Mammary epithelial cell (primary cell): ENCODE measurements at regions of chr5 and their contacts with region 1.

Region 1: DNA sequence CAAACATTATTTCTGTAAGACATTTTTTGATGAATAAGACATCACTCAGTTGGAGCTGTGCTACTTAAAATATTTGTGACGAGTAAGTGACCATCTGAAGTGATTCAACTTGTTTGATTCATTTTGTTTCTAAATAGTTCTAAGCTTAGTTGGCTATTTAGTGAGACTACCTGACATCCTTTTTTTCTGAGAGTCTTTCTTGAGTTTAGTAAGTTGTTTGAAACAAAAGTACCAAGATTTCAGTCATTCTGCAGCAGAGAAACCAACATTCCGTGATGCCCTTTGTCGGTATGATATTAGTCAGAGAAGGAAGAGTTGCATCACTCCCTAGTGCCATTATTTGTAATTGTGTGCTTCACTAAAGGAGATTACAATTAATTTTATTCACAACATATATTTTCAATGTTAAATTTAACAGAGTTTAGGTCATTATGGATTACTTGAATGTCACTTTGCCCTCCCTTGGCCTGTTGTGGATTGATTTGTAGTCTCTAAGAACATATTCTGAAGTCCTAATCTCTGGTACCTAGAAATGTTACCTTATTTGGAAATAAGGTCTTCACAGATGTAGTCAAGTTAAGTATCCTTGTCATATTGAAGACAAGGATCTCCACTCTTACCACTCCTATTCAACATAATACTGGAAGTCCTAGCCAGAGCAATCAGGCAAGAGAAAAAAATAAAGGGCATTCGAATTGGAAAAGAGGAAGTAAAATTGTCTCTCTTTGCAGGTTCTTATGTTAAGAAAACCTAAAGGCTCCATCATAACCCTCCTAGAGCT is 212.2 kb downstream of the PCSK1 start:
- DNase-seq: peak; percentile 88
- H3K4me3 ChIP-seq: peak overlapping the region in 1 of 3 experiments; percentile 14
- H3K27ac ChIP-seq: peak overlapping the region; percentile 95
- H3K4me1 ChIP-seq: peaks cover 25% of the 10 kb centered on the region
- H3K27me3 ChIP-seq: no peaks in the 10 kb centered on the region
- CTCF ChIP-seq: no peak

Region 2: DNA sequence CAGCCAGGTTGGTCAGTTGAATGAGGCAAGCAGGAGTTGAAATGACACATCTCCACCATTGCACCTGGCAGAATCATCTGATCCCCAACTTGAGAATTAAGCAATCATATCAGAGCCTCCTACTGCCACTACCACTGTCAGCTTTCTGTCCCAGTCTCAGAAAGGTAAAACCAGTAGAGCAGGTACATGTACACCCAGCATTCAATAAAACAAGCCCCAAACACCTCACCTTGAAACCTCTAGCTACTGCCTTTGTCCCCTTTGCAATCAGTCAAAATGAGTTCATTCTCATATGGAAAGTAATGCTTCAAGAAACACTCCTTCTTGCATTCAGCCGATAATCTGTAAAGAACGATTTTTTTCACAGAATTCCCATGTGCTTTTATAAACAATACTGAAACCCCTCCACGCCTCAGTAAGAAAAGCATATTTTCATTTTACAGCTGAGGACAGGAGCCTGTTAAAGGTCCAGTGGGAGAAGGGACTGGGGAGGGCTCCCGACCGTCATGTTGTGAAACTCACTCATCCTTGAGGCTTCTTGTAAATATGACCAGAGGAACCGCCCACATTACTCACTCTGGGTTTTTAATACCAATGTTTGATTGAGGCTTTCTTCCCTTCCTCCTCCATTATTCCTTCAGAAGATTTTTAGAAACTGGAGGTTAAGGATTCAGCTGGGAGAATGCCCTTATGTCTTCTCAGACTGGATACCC is 337.0 kb before region 1 on chr5:
- CTCF ChIA-PET with region 1: no interaction called
- dilution Hi-C with region 1: no loop called
- in situ Hi-C with region 1: no loop called
- intact Hi-C with region 1: no loop called
- DNase-seq: peak; percentile 61
- H3K4me3 ChIP-seq: no peak overlapping the region
- H3K27ac ChIP-seq: no peak overlapping the region
- H3K4me1 ChIP-seq: no peaks in the 10 kb centered on the region
- H3K27me3 ChIP-seq: no peaks in the 10 kb centered on the region
- CTCF ChIP-seq: no peak

Region 3: DNA sequence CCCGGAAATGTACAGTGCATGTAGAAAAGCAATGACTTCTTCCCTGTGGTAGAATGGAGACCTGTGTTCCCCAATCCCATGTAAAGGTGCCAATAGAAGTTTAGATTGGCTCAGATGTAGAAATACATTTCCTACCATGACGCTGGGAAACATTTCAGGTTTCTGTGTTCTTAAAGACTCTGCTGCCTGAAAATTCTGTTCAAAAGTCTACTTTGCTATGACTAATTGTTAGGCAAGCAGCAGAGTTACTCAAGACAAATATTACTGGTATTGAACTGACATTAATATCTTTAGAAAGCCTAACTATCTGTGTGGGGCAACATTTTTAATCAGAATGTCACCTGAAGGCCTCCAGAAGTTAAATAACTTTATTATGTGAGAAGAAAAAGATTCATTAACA is 183.7 kb before region 1 on chr5:
- CTCF ChIA-PET with region 1: no interaction called
- dilution Hi-C with region 1: no loop called
- in situ Hi-C with region 1: no loop called
- intact Hi-C with region 1: no loop called
- DNase-seq: peak; percentile 72
- H3K4me3 ChIP-seq: no peak overlapping the region
- H3K27ac ChIP-seq: peak overlapping the region; percentile 51
- H3K4me1 ChIP-seq: peaks cover 22% of the 10 kb centered on the region
- H3K27me3 ChIP-seq: no peaks in the 10 kb centered on the region
- CTCF ChIP-seq: no peak

Region 4: DNA sequence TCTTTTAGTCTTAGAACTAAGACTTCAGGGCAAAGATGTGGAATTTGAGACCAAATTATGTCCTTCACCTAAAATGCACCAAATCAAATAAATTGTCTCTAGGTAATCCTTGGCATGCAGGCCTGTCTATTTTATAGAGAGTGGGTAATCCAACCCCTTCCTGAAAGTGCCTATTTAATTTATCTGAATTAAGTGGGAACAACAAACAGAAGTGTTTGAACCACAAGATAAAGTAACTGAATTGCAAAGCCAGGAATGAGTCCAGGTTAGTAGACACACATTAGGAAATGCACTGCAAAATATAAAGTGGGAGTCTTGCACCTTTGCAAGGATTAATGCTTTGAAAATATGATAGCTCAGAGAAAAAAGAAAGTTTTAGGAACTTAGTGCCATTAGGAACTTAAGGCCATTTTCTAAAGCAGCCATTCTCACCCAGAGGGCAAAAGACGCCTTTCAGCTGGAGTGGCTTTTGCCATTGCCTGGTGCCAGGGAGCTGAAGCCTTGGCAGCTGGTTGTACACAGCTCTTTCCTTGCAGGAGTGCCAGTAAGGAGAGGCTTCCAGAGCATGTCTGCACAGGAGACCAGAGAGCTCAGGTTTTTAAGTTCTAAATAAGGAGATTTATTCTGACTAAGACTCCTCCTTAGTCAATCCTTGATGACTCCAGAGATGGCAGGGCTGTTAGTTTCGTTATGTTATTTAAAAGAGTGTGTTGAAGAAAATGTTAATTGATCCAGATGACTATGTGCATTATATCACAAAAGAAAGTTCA is 107.4 kb before region 1 on chr5:
- CTCF ChIA-PET with region 1: no interaction called
- dilution Hi-C with region 1: no loop called
- in situ Hi-C with region 1: no loop called
- intact Hi-C with region 1: loop called (anchors 2 kb)
- DNase-seq: peak; percentile 89
- H3K4me3 ChIP-seq: peak overlapping the region in 2 of 3 experiments; percentile 8
- H3K27ac ChIP-seq: peak overlapping the region; percentile 88
- H3K4me1 ChIP-seq: peaks cover 47% of the 10 kb centered on the region
- H3K27me3 ChIP-seq: no peaks in the 10 kb centered on the region
- CTCF ChIP-seq: no peak

Region 5: GRCh38 chr5:96151891-96152290 is 68.9 kb before region 1 on chr5:
- CTCF ChIA-PET with region 1: no interaction called
- dilution Hi-C with region 1: no loop called
- in situ Hi-C with region 1: no loop called
- intact Hi-C with region 1: loop called (anchors 2 kb)
- DNase-seq: no peak
- H3K4me3 ChIP-seq: no peak overlapping the region
- H3K27ac ChIP-seq: no peak overlapping the region
- H3K4me1 ChIP-seq: peaks cover 52% of the 10 kb centered on the region
- H3K27me3 ChIP-seq: no peaks in the 10 kb centered on the region
- CTCF ChIP-seq: no peak

Region 6: DNA sequence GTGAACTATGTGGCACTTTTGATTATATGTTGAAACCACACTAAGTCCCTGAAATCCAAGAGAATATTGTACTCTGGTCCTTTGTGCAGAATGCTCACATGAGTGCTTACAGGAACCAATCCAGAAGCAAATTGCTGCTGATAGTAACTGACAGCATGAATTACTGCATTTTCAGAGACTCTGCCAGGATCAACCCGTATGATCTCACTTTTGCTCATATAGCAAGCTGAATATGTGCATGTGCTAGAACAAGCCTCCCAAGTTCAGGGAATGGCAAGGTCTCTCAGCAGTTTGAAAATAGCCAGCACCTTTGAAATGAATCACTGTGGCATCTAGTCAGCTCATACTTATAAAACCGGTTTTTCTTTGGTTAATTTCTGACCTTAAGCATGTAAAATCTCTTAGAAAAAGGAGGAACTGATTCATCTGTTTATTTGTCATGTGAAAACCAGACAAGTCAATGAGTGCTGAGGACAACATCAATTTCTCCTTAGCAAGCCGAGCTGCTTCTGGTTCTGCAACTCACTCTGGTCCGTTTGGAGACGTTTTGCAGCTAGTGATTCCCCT is 43.4 kb before region 1 on chr5:
- CTCF ChIA-PET with region 1: no interaction called
- dilution Hi-C with region 1: no loop called
- in situ Hi-C with region 1: no loop called
- intact Hi-C with region 1: loop called (anchors 1 kb)
- DNase-seq: peak; percentile 99
- H3K4me3 ChIP-seq: no peak overlapping the region
- H3K27ac ChIP-seq: peak overlapping the region; percentile 50
- H3K4me1 ChIP-seq: peaks cover 40% of the 10 kb centered on the region
- H3K27me3 ChIP-seq: no peaks in the 10 kb centered on the region
- CTCF ChIP-seq: no peak

Region 7: GRCh38 chr5:96324708-96325107 is 103.9 kb after region 1 on chr5:
- CTCF ChIA-PET with region 1: no interaction called
- dilution Hi-C with region 1: no loop called
- in situ Hi-C with region 1: no loop called
- intact Hi-C with region 1: loop called (anchors 2 kb)
- DNase-seq: peak; percentile 87
- H3K4me3 ChIP-seq: no peak overlapping the region
- H3K27ac ChIP-seq: peak overlapping the region; percentile 66
- H3K4me1 ChIP-seq: peaks cover 26% of the 10 kb centered on the region
- H3K27me3 ChIP-seq: no peaks in the 10 kb centered on the region
- CTCF ChIP-seq: no peak

Region 8: DNA sequence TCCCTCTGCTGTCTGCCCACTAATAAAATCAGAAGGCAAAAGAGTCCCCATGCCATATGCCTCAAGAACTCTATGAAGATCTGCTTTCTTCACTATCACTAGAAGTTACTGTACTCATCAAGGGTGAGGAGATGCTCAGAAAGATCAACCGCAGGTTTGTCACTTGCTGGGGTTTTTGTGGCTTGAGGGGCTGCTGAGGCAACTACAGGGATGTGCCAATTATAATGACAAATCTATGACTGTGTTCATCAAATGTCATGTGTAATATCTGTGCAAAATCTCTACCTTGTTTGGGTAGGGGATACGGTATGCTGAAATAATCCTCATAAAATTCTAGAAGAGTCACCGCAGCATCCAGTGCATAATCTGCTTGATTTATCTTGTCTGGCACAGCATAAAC is 574.0 kb after region 1 on chr5:
- CTCF ChIA-PET with region 1: no interaction called
- dilution Hi-C with region 1: no loop called
- in situ Hi-C with region 1: no loop called
- intact Hi-C with region 1: no loop called
- DNase-seq: no peak
- H3K4me3 ChIP-seq: no peak overlapping the region
- H3K27ac ChIP-seq: no peak overlapping the region
- H3K4me1 ChIP-seq: peaks cover 10% of the 10 kb centered on the region
- H3K27me3 ChIP-seq: no peaks in the 10 kb centered on the region
- CTCF ChIP-seq: no peak